GM18951 (cell line): ENCODE measurements at regions of chr18 and their contacts with region 1.

Region 1: GRCh38 chr18:55415258-55415871 is 172.6 kb downstream of the TCF4 start:
- POLR2A ChIP-seq: no peak

Region 2: GRCh38 chr18:56563568-56563967 is 1148.2 kb after region 1 on chr18:
- in situ Hi-C with region 1: loop called (anchors 25 kb)
- POLR2A ChIP-seq: no peak